ENCODE measurements at regions of chr22 and their contacts with region 1.

Region 1: GRCh38 chr22:44080936-44081861 is 57.1 kb downstream of the PARVB start:
- DNase-seq: no peak
- ATAC-seq: peak; percentile 84
- H3K4me3 ChIP-seq: no peak overlapping the region
- H3K27ac ChIP-seq: no peak overlapping the region
- H3K4me1 ChIP-seq: no peaks in the 10 kb centered on the region
- H3K27me3 ChIP-seq: no peaks in the 10 kb centered on the region
- CTCF ChIP-seq: peak; percentile 77 to 91 (median 82)
- EP300 ChIP-seq: no peak
- POLR2A ChIP-seq: no peak
- RAD21 ChIP-seq: peak; percentile 53

Region 2: GRCh38 chr22:43884600-43885325 is 196.4 kb before region 1 on chr22:
- CTCF ChIA-PET with region 1: interaction called, 13 read pairs
- POLR2A ChIA-PET with region 1: no interaction called
- RAD21 ChIA-PET with region 1: interaction called, 4 read pairs
- SMC1A ChIA-PET with region 1: no interaction called
- in situ Hi-C with region 1: no loop called
- intact Hi-C with region 1: no loop called
- DNase-seq: peak; percentile 33
- ATAC-seq: peak; percentile 82
- H3K4me3 ChIP-seq: no peak overlapping the region
- H3K27ac ChIP-seq: no peak overlapping the region
- H3K4me1 ChIP-seq: peaks cover 9% of the 10 kb centered on the region
- H3K27me3 ChIP-seq: peaks cover 0 to 5% of the 10 kb centered on the region in 2 experiments
- CTCF ChIP-seq: peak; percentile 66 to 92 (median 80)
- EP300 ChIP-seq: peak in 1 of 2 experiments; percentile 10; a peak in 1 of 4 replicates
- POLR2A ChIP-seq: no peak
- RAD21 ChIP-seq: peak; percentile 60

Region 3: GRCh38 chr22:43993027-43993760 is 88.0 kb before region 1 on chr22:
- CTCF ChIA-PET with region 1: interaction called, 499 read pairs
- POLR2A ChIA-PET with region 1: interaction called, 10 read pairs
- RAD21 ChIA-PET with region 1: interaction called, 185 read pairs
- SMC1A ChIA-PET with region 1: interaction called, 282 read pairs
- in situ Hi-C with region 1: loop called (anchors 5 kb)
- intact Hi-C with region 1: loop called (anchors 1 kb)
- DNase-seq: peak; percentile 5
- ATAC-seq: peak; percentile 84
- H3K4me3 ChIP-seq: no peak overlapping the region
- H3K27ac ChIP-seq: no peak overlapping the region
- H3K4me1 ChIP-seq: peaks cover 15% of the 10 kb centered on the region
- H3K27me3 ChIP-seq: no peaks in the 10 kb centered on the region
- CTCF ChIP-seq: peak; percentile 96 to 98 (median 97)
- EP300 ChIP-seq: no peak
- POLR2A ChIP-seq: no peak
- RAD21 ChIP-seq: peak; percentile 98

Region 4: DNA sequence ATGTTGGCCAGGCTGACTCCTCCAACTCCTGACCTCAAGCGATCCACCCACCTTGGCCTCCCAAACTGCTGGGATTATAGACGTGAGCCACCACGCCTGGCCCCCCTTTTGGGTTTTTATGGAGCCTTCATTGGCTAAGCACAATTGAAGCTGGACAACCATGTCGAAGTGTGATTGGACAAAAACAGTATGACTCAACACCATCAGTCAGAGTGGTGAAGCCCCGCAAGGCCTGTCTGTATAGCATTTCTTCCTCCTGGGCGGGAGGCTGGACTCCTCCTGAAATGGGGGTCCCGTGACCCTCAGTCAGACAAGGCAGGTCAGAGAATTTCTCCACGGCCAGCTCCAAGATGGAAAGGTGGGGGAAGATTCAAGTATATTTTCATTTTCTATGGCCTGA is 60.2 kb before region 1 on chr22:
- CTCF ChIA-PET with region 1: interaction called, 15 read pairs
- POLR2A ChIA-PET with region 1: interaction called, 7 read pairs
- RAD21 ChIA-PET with region 1: interaction called, 10 read pairs
- SMC1A ChIA-PET with region 1: interaction called, 16 read pairs
- in situ Hi-C with region 1: no loop called
- intact Hi-C with region 1: loop called (anchors 5 kb)
- DNase-seq: no peak
- ATAC-seq: no peak
- H3K4me3 ChIP-seq: 0 out of 2 replicates have a peak overlapping the region, but pooled peaks have one; percentile 40
- H3K27ac ChIP-seq: no peak overlapping the region
- H3K4me1 ChIP-seq: peaks cover 3% of the 10 kb centered on the region; the same call in 1 of the 2 replicates
- H3K27me3 ChIP-seq: no peaks in the 10 kb centered on the region
- CTCF ChIP-seq: no peak
- EP300 ChIP-seq: no peak
- POLR2A ChIP-seq: no peak
- RAD21 ChIP-seq: no peak

Region 5: DNA sequence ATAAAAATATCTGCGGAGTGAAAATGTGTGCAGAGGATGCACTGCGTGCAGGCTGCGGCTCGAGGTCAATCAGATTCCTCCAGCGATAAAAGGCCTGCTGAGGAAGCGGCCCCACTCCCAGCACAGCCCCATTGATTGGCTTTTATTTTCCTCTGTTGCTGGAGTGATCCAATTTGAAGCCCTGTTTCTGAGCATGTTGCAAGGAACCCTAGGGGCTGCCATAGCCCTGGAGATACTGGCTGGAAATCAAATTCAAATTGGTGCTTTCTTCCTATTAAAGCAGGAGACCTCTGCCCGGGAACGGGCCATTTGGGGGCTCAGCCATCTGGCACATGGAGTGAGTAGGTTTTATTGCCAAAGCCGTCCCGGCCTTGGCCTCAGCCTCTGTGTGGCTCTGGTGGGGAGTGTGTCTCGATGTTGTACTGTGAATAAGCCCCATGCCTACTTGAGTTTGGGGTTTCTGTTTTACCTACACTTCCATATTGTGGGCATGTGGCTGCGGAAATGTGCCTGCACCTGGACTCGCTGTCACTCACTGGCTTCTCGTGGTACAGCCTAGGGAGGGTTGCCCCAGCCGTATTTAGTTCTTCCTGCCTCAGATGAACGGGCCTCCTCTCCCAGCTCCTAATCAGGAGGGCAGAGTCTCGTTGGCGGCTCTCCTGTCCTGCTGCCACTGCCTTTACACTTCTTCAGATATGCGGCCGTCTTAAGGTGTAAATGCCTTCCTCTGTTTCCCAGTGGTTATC is 31.5 kb before region 1 on chr22:
- CTCF ChIA-PET with region 1: interaction called, 14 read pairs
- POLR2A ChIA-PET with region 1: no interaction called
- RAD21 ChIA-PET with region 1: no interaction called
- SMC1A ChIA-PET with region 1: interaction called, 20 read pairs
- in situ Hi-C with region 1: no loop called
- intact Hi-C with region 1: no loop called
- DNase-seq: no peak
- ATAC-seq: no peak; the same call in 2 of the 3 replicates
- H3K4me3 ChIP-seq: no peak overlapping the region
- H3K27ac ChIP-seq: peak overlapping the region; percentile 27
- H3K4me1 ChIP-seq: peaks cover 35% of the 10 kb centered on the region
- H3K27me3 ChIP-seq: no peaks in the 10 kb centered on the region
- CTCF ChIP-seq: no peak
- EP300 ChIP-seq: no peak
- POLR2A ChIP-seq: no peak
- RAD21 ChIP-seq: no peak

Region 6: DNA sequence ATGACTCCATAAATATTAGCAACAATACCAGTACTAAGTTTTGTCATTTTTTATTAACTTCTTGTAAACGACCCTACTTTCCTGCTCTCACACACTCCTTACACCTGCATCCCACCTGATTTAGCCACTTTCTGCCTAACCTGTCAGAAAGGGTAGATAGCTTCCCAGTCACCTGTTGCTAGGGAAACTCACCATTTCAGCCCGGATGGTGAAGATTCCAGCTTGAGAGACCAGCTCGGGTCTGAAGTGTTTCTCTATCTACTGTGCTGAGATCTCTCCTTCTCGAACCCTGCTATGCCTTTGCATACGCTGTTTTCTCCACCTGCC is 99.5 kb after region 1 on chr22 and contains the start of gene PARVG:
- CTCF ChIA-PET with region 1: interaction called, 17 read pairs
- POLR2A ChIA-PET with region 1: no interaction called
- RAD21 ChIA-PET with region 1: interaction called, 9 read pairs
- SMC1A ChIA-PET with region 1: interaction called, 7 read pairs
- in situ Hi-C with region 1: no loop called
- intact Hi-C with region 1: no loop called
- DNase-seq: peak; percentile 57
- ATAC-seq: peak; percentile 76
- H3K4me3 ChIP-seq: peak within 1 kb of the TSS; percentile 79
- H3K27ac ChIP-seq: peak within 1 kb of the TSS; percentile 91
- H3K4me1 ChIP-seq: peaks cover 13% of the 10 kb centered on the region
- H3K27me3 ChIP-seq: no peaks in the 10 kb centered on the region
- CTCF ChIP-seq: no peak
- EP300 ChIP-seq: no peak
- POLR2A ChIP-seq: no peak
- RAD21 ChIP-seq: no peak
- polyA plus RNA-seq, gene PARVG: 6.3 to 11.7 TPM

Region 7: DNA sequence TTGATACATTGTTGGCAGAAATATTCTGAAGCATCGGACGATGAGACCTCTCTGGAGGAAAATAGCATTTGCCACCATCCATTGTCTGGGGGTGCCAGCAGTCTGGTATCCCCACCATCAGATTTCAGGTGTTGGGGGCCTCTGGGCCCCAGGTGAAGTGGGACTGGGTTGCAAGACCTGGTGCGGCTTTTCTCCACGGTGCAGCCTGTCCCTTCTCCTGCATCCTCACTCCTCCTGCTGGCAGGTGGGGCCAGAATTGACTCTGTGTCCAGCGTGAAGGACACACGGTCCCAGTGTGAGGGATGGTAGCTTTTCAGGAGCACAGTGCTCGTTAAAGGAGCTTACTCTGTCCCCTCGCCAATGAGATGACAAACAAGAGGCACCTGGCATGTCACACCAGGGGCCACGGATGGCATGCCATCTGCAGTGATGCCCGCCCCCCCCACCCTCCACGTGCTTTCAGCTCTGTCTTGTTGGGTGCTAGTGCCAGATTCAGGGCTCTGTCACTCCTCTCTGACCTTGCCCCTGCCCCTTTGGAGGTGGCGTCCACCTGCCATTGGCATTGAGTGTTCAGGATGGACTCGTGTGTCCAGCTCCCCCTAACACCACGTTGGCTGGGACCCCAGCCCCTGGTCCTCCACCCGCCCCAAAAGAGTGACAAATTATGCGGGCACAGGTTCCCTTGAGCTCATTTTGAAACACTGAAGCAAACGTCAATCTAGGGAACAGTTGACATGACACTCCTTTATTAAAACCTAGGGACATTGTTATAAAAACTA is 161.9 kb after region 1 on chr22:
- CTCF ChIA-PET with region 1: no interaction called
- POLR2A ChIA-PET with region 1: no interaction called
- RAD21 ChIA-PET with region 1: no interaction called
- SMC1A ChIA-PET with region 1: no interaction called
- in situ Hi-C with region 1: no loop called
- intact Hi-C with region 1: no loop called
- DNase-seq: no peak
- ATAC-seq: no peak
- H3K4me3 ChIP-seq: no peak overlapping the region
- H3K27ac ChIP-seq: no peak overlapping the region
- H3K4me1 ChIP-seq: no peaks in the 10 kb centered on the region
- H3K27me3 ChIP-seq: no peaks in the 10 kb centered on the region; a peak in 2 of 4 replicates
- CTCF ChIP-seq: no peak
- EP300 ChIP-seq: no peak
- POLR2A ChIP-seq: no peak
- RAD21 ChIP-seq: no peak

Region 8: DNA sequence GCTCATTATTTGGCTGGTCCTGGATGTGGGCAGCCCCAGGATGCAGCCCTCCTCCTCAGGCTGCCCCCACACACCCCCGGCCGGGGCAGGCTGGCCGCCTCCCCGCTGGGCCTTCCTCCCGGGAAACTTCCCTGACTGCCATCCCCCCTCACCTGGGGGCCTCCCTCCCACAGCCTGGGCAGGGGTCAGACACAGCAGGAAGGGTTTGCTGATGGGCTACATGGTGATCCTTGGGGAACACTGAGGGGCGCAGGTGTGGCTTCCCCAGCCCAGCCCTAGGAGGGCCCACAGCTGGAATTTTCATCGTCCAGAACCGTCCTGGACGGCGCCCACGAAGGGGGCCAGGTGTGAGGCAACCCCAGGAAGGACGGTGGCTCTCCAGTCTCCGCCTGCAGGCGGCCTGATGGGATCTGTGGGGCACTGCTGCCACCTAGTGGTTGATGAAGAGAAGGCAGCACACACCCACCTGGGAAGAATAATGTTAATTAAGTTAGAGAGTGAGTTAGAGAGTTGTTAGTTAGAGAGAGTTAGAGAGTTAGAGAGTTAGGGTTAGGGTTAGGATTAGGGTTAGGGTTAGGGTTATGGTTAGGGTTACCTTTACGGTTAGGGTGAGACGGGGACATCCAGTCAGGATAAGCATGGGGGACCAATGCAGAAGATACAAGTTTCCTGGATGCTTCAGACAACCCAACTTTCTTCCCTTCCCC is 544.9 kb after region 1 on chr22:
- CTCF ChIA-PET with region 1: interaction called, 9 read pairs
- POLR2A ChIA-PET with region 1: no interaction called
- RAD21 ChIA-PET with region 1: interaction called, 13 read pairs
- SMC1A ChIA-PET with region 1: interaction called, 5 read pairs
- in situ Hi-C with region 1: loop called (anchors 5 kb)
- intact Hi-C with region 1: loop called (anchors 2 kb)
- DNase-seq: peak; percentile 15
- ATAC-seq: peak; percentile 94
- H3K4me3 ChIP-seq: no peak overlapping the region
- H3K27ac ChIP-seq: no peak overlapping the region
- H3K4me1 ChIP-seq: no peaks in the 10 kb centered on the region
- H3K27me3 ChIP-seq: no peaks in the 10 kb centered on the region
- CTCF ChIP-seq: peak; percentile 89 to 99 (median 92)
- EP300 ChIP-seq: no peak
- POLR2A ChIP-seq: no peak
- RAD21 ChIP-seq: peak; percentile 97

Measured in GM12878 (cell line).